PC-9 (cell line): ENCODE measurements at regions of chr14 and their contacts with region 1.

Region 1: DNA sequence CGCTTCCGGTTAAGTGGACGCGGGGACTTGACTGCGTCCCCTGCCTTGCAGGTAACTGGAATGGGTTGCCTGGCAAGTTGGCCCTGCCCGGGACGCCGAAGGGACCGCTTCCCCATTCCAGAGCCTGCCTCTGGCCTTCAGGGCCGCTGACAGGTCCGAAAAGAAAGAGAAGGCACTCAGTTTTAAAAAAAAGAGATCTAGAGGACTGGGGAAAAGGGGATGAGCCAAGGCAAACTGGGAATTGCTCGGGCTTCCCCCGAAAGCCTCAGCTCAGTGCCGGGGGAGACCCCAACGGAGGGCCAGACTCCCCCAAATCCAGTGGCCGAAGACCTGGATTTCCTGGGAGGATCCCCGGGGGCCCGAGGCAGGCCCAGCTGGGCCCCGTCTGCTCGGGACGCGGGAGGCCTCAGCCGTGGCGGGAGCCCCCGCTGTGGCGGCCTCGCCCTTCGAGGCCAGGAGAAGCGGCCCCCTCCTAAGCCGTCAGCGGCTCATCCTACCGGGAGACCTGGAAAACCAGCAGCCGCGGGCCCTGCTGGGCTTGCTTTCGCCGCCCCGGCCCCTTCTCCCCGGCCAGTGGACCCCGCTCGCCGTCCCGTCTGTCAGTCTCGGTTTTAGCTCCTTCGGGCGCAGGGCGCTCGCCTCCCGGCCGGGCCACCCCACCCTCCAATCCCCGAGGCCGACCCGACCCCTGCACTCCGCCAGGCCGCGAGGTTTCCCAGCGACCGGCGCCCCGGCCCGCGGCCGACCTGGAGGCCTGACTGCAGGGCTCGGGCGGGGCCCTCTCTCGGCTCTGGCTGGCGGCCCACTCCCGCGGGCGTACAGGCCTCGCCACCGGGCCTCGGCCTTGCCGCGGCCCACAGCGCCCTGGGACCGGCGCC is 12.5 kb downstream of the OTX2 start:
- DNase-seq: no peak
- H3K4me3 ChIP-seq: no peak overlapping the region
- H3K27ac ChIP-seq: no peak overlapping the region
- H3K4me1 ChIP-seq: no peaks in the 10 kb centered on the region
- H3K27me3 ChIP-seq: no peaks in the 10 kb centered on the region
- CTCF ChIP-seq: no peak

Region 2: GRCh38 chr14:55851301-55851700 is 946.5 kb before region 1 on chr14:
- CTCF ChIA-PET with region 1: no interaction called
- POLR2A ChIA-PET with region 1: interaction called, 18 read pairs
- intact Hi-C with region 1: no loop called
- DNase-seq: no peak
- H3K4me3 ChIP-seq: no peak overlapping the region
- H3K27ac ChIP-seq: no peak overlapping the region
- H3K4me1 ChIP-seq: no peaks in the 10 kb centered on the region
- H3K27me3 ChIP-seq: no peaks in the 10 kb centered on the region
- CTCF ChIP-seq: no peak

Region 3: GRCh38 chr14:56816574-56817391 is 19.0 kb after region 1 on chr14:
- CTCF ChIA-PET with region 1: no interaction called
- POLR2A ChIA-PET with region 1: no interaction called
- intact Hi-C with region 1: no loop called
- DNase-seq: no peak
- H3K4me3 ChIP-seq: no peak overlapping the region
- H3K27ac ChIP-seq: no peak overlapping the region
- H3K4me1 ChIP-seq: peaks cover 13% of the 10 kb centered on the region
- H3K27me3 ChIP-seq: no peaks in the 10 kb centered on the region
- CTCF ChIP-seq: no peak

Region 4: DNA sequence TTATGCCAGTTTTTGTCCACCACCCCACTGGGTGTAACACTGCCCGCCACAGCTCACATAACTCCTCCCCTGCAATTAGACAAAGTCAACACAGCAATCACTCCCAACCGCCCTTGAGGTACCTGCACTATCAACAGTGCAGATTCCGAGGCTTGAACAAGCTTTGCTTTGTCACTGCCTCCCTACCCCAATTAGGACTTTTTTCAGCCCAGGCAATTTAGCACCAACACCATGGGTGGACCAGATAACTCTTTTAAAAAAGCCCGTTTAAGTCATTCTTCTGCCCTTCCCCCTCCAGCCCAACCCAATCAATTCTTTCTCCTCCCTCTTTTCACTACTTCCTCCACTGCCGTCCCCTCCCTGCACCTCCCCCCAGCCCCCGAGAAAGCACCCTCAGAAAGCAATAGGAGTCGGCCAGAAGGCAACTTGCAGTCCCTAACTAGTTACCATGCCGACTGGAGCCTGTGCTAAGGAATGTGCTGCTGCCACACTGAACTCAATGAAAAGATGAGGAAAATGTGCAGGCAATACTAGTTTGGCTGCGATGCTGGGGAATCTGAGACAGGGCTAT is 58.2 kb after region 1 on chr14:
- CTCF ChIA-PET with region 1: no interaction called
- POLR2A ChIA-PET with region 1: no interaction called
- intact Hi-C with region 1: no loop called
- DNase-seq: no peak
- H3K4me3 ChIP-seq: no peak overlapping the region
- H3K27ac ChIP-seq: no peak overlapping the region
- H3K4me1 ChIP-seq: peaks cover 6% of the 10 kb centered on the region; the same call in 1 of the 2 replicates
- H3K27me3 ChIP-seq: no peaks in the 10 kb centered on the region
- CTCF ChIP-seq: no peak